B cell (primary cell): ENCODE measurements at regions of chr17 and their contacts with region 1.

Region 1: DNA sequence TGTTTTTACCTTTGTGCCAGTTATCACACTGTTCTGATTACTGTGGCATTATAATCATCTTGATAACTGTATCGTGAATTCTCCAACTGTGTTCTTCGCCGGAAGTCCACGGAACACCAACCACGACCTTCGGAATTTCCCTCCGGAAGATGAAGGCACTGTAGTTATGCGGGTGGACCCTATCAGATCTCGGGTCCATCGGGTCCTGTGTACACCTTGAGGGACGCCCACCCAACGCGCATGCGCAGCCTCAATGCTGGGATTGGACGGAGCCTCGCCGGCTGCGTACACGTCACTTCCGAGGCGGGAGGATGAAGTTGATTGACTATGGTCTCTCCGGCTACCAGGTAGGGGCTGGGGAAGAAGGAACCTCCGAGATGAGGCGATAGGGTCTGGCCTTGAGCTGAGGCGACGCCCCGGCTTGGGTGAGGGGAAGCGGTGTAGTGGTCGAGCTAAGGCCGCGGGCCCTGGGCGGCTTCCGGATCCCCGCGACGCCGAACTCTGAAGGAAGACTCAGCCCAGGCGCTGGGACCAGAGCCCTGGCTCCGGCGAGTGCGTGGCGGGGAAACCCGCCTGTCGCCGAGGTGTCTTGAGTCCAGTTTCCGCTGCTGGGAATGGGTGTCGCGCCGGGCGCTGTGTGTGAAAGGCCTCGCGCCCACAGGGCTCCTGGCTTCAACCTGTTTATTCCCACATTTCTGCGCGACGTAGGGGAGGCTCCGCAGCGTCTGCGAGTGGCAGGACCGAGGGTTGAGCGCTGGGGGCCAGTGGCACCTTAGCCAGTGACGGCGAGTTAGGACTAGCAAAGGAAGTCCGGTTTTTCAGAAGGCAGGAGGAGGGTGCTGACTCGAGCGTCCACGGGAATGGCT is at the start of gene DHRS7B:
- DNase-seq: peak; percentile 97
- ATAC-seq: peak; percentile 93
- H3K4me3 ChIP-seq: peak within 1 kb of the TSS; percentile 64 to 92 (median 85)
- H3K4me3 Mint-ChIP-seq: peak within 1 kb of the TSS; percentile 95
- H3K27ac ChIP-seq: peak within 1 kb of the TSS; percentile 82 to 95
- H3K27ac Mint-ChIP-seq: peak within 1 kb of the TSS; percentile 91
- H3K4me1 ChIP-seq: peaks cover 19 to 22% of the 10 kb centered on the region in 2 donors
- H3K4me1 Mint-ChIP-seq: peaks cover 28% of the 10 kb centered on the region
- H3K27me3 ChIP-seq: peaks cover 0 to 3% (median 0%) of the 10 kb centered on the region in 4 experiments
- H3K27me3 Mint-ChIP-seq: no peaks in the 10 kb centered on the region
- CTCF ChIP-seq: no peak
- total RNA-seq, gene DHRS7B: 13.4 and 14.2 TPM in 2 replicates

Region 2: GRCh38 chr17:20155258-20156195 is 971.4 kb before region 1 on chr17:
- CTCF ChIA-PET with region 1: no interaction called
- POLR2A ChIA-PET with region 1: no interaction called
- intact Hi-C with region 1: loop called (anchors 2 kb)
- DNase-seq: peak; percentile 99
- ATAC-seq: peak; percentile 96
- H3K4me3 ChIP-seq: peak overlapping the region; percentile 8 to 77 (median 72)
- H3K4me3 Mint-ChIP-seq: no peak overlapping the region
- H3K27ac ChIP-seq: peak overlapping the region; percentile 56 to 85
- H3K27ac Mint-ChIP-seq: no peak overlapping the region
- H3K4me1 ChIP-seq: peaks cover 27 to 35% of the 10 kb centered on the region in 2 donors
- H3K4me1 Mint-ChIP-seq: peaks cover 4% of the 10 kb centered on the region
- H3K27me3 ChIP-seq: no peaks in the 10 kb centered on the region
- H3K27me3 Mint-ChIP-seq: no peaks in the 10 kb centered on the region
- CTCF ChIP-seq: no peak

Region 3: DNA sequence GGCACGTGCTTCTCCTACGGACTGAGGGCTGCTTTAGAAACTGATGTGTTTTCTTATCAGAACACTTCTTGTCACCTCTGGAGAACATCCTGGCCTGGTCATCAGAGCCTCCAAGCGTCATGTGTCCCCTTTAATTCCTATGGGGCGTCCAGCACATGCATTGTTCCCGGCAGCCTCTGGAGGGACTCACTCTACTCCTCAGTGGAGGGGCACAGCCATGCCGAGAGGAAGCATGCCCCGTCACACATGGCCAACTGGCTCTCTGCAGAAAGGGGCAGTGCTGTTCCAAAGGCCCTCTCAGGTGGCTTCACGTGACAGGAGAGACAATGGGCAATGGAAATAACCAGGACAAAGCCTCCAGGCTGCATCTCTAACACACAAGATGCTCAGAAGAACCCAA is 515.6 kb before region 1 on chr17:
- CTCF ChIA-PET with region 1: no interaction called
- POLR2A ChIA-PET with region 1: no interaction called
- intact Hi-C with region 1: no loop called
- DNase-seq: no peak
- ATAC-seq: no peak
- H3K4me3 ChIP-seq: no peak overlapping the region
- H3K4me3 Mint-ChIP-seq: no peak overlapping the region
- H3K27ac ChIP-seq: no peak overlapping the region
- H3K27ac Mint-ChIP-seq: no peak overlapping the region
- H3K4me1 ChIP-seq: peaks cover 0 to 3% of the 10 kb centered on the region in 2 donors
- H3K4me1 Mint-ChIP-seq: peaks cover 2% of the 10 kb centered on the region
- H3K27me3 ChIP-seq: peaks cover 0 to 4% (median 0%) of the 10 kb centered on the region in 4 experiments
- H3K27me3 Mint-ChIP-seq: no peaks in the 10 kb centered on the region
- CTCF ChIP-seq: no peak

Region 4: DNA sequence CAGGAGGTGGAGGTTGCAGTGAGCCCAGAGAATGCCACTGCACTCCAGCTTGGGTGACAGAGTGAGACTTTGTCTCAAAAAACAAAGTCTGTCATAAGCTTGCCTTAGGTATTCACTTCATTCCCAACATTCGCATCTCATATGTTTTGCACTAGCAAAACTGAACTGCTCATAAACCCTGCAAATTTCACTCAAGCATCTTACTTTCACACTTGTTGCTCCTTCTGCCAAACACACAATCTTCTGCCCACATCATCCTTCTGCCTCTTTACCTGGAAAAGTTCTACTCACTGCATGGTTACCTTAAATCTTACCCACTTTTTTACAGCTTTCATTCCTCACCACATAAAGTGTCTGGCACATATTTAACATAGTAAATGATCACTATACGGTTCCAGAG is 236.5 kb before region 1 on chr17:
- CTCF ChIA-PET with region 1: no interaction called
- POLR2A ChIA-PET with region 1: no interaction called
- intact Hi-C with region 1: no loop called
- DNase-seq: no peak
- ATAC-seq: no peak
- H3K4me3 ChIP-seq: no peak overlapping the region
- H3K4me3 Mint-ChIP-seq: no peak overlapping the region
- H3K27ac ChIP-seq: no peak overlapping the region
- H3K27ac Mint-ChIP-seq: no peak overlapping the region
- H3K4me1 ChIP-seq: no peaks in the 10 kb centered on the region
- H3K4me1 Mint-ChIP-seq: no peaks in the 10 kb centered on the region
- H3K27me3 ChIP-seq: no peaks in the 10 kb centered on the region
- H3K27me3 Mint-ChIP-seq: peaks cover 14% of the 10 kb centered on the region
- CTCF ChIP-seq: no peak

Region 5: DNA sequence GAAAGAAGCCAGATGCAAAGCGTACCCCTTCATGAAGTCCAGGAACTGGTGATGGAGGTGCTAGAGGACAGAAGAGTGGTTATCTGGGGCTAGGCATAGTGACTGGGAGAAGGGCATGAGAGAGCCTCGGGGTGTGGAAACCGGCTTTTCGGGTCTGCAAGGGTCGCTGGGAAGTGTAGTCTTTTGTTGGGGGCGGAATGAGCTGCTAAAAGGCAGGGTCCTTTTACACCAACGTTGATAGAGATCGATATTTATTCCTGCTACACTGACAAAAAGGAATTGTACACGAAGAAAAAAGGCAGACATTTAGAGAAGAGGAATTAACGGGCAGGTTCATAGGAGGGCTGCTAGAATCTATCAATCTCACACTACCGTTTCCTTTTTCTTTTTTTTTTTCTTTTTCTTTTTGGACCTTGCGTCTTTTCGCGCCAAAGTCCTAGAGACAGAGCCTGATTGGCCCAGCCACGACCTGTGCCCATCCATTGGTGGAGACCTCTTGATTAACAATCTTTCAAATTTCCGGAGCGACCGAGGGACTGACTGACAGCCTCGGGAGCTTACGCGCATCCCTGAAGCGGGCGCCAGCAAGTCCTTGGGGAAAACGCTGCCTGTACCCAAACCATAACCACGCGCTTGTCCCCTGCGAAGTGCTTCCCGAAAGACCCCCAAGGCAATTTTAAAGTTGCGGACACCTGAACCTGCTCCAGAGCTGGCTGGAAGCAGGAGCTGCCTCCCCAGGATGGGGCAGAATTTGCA is 27.8 kb before region 1 on chr17:
- CTCF ChIA-PET with region 1: interaction called, 6 read pairs
- POLR2A ChIA-PET with region 1: no interaction called
- intact Hi-C with region 1: loop called (anchors 1 kb)
- DNase-seq: peak; percentile 84
- ATAC-seq: peak; percentile 94
- H3K4me3 ChIP-seq: peak overlapping the region; percentile 60 to 82 (median 68)
- H3K4me3 Mint-ChIP-seq: peak overlapping the region; percentile 96
- H3K27ac ChIP-seq: no peak overlapping the region
- H3K27ac Mint-ChIP-seq: peak overlapping the region; percentile 46
- H3K4me1 ChIP-seq: peaks cover 4 to 19% of the 10 kb centered on the region in 2 donors
- H3K4me1 Mint-ChIP-seq: peaks cover 15% of the 10 kb centered on the region
- H3K27me3 ChIP-seq: no peaks in the 10 kb centered on the region
- H3K27me3 Mint-ChIP-seq: no peaks in the 10 kb centered on the region
- CTCF ChIP-seq: no peak

Region 6: DNA sequence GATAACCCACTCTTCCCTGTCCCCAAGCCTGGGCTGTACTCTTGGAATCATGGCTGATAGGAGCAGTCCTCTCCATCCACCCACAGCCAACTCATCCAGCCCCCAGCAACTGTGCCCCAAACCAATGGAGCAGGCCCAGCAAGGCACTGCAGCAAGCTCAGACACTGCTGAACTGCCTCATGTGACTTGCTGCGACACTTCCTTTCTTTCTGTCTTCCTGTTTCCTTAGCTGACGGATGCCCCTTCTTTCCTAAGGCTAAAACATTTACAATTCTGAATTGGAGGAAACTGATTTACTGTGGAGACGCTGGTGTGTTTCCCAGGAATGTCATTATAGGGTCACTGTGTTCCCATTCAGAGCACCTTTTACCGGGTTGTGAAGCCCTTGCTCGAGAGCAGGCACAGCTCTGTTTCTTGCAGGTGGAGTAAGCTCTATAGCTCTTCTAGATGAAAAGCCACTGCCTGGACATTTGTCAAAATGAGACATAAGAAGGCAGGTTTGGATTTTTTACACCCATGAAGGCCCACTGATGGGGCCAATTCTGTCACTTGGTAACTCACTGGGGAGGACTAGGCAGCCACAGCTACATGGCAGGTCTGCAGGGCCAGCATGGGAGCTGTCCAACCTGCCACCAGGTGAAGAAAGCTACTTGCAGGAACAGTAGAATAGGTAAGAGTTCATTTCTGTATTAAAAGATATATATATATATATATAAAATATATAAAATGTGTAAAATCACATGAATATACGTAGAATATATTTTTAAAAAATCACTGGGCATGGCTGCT is 59.7 kb after region 1 on chr17:
- CTCF ChIA-PET with region 1: no interaction called
- POLR2A ChIA-PET with region 1: no interaction called
- intact Hi-C with region 1: no loop called
- DNase-seq: no peak
- ATAC-seq: no peak
- H3K4me3 ChIP-seq: no peak overlapping the region
- H3K4me3 Mint-ChIP-seq: no peak overlapping the region
- H3K27ac ChIP-seq: no peak overlapping the region
- H3K27ac Mint-ChIP-seq: no peak overlapping the region
- H3K4me1 ChIP-seq: no peaks in the 10 kb centered on the region
- H3K4me1 Mint-ChIP-seq: no peaks in the 10 kb centered on the region
- H3K27me3 ChIP-seq: no peaks in the 10 kb centered on the region
- H3K27me3 Mint-ChIP-seq: no peaks in the 10 kb centered on the region
- CTCF ChIP-seq: no peak

Region 7: GRCh38 chr17:21214015-21214776 is 87.3 kb after region 1 on chr17 and contains the start of gene TMEM11:
- CTCF ChIA-PET with region 1: no interaction called
- POLR2A ChIA-PET with region 1: no interaction called
- intact Hi-C with region 1: loop called (anchors 1 kb)
- DNase-seq: peak; percentile 96
- ATAC-seq: peak; percentile 91
- H3K4me3 ChIP-seq: peak within 1 kb of the TSS; percentile 68 to 99 (median 89)
- H3K4me3 Mint-ChIP-seq: peak within 1 kb of the TSS; percentile 93
- H3K27ac ChIP-seq: peak within 1 kb of the TSS; percentile 85 to 91
- H3K27ac Mint-ChIP-seq: peak within 1 kb of the TSS; percentile 92
- H3K4me1 ChIP-seq: peaks cover 31 to 37% of the 10 kb centered on the region in 2 donors
- H3K4me1 Mint-ChIP-seq: peaks cover 49% of the 10 kb centered on the region
- H3K27me3 ChIP-seq: no peaks in the 10 kb centered on the region
- H3K27me3 Mint-ChIP-seq: no peaks in the 10 kb centered on the region
- CTCF ChIP-seq: no peak
- total RNA-seq, gene TMEM11: 24.7 and 25.3 TPM in 2 replicates

Region 8: DNA sequence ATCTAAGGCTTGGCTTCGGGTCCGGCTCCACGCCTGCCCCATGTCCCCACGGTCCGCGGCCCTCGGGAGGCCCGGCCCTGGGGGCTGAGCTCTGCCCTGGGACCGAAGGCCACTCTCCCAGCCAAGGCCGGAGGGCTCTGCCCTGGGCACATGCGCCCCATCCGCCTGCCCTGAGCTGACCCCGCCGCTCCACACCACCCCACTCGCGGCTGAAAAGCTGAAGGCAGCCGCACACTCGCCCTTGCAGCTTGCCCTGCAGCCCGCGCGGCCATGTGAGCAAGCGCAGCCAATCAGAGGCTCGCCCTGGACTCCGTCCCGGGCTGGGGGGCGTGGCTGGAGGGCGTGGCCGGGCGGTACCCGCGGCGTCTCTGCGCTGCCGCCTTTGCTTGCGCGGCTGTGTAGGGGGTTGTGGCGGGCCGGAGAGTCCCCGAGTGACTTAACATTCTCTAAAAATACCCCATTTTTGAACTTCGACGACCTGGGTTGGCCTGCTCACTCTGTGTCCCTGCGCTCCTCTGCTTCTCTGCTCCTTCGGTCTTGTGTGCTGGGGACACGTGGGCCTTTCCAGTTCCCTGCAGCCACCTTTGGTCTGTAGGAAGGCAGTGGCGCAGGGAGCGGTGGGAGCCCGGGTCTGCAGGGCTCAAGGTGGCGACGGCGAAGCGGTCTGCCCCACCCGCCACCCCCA is 148.8 kb after region 1 on chr17:
- CTCF ChIA-PET with region 1: interaction called, 41 read pairs
- POLR2A ChIA-PET with region 1: interaction called, 8 read pairs
- intact Hi-C with region 1: loop called (anchors 2 kb)
- DNase-seq: peak; percentile 93
- ATAC-seq: peak; percentile 86
- H3K4me3 ChIP-seq: peak overlapping the region; percentile 34 to 84 (median 71)
- H3K4me3 Mint-ChIP-seq: peak overlapping the region; percentile 98
- H3K27ac ChIP-seq: peak overlapping the region; percentile 86
- H3K27ac Mint-ChIP-seq: peak overlapping the region; percentile 86
- H3K4me1 ChIP-seq: peaks cover 35 to 41% of the 10 kb centered on the region in 2 donors
- H3K4me1 Mint-ChIP-seq: peaks cover 34% of the 10 kb centered on the region
- H3K27me3 ChIP-seq: no peaks in the 10 kb centered on the region
- H3K27me3 Mint-ChIP-seq: no peaks in the 10 kb centered on the region
- CTCF ChIP-seq: peak; percentile 34

Region 9: GRCh38 chr17:21551081-21551881 is 424.4 kb after region 1 on chr17:
- CTCF ChIA-PET with region 1: no interaction called
- POLR2A ChIA-PET with region 1: no interaction called
- intact Hi-C with region 1: loop called (anchors 1 kb)
- DNase-seq: peak; percentile 83
- ATAC-seq: peak; percentile 96
- H3K4me3 ChIP-seq: peak overlapping the region in 4 of 5 experiments; percentile 70 to 82 (median 72)
- H3K4me3 Mint-ChIP-seq: peak overlapping the region; percentile 89
- H3K27ac ChIP-seq: no peak overlapping the region
- H3K27ac Mint-ChIP-seq: peak overlapping the region; percentile 50
- H3K4me1 ChIP-seq: peaks cover 10 to 11% of the 10 kb centered on the region in 2 donors
- H3K4me1 Mint-ChIP-seq: peaks cover 19% of the 10 kb centered on the region
- H3K27me3 ChIP-seq: peaks cover 0 to 16% (median 4%) of the 10 kb centered on the region in 4 experiments
- H3K27me3 Mint-ChIP-seq: peaks cover 31% of the 10 kb centered on the region
- CTCF ChIP-seq: no peak